Sigmoid colon (tissue), 7 donors: ENCODE measurements at regions of chr10 and their contacts with region 1.

Region 1: GRCh38 chr10:15097011-15097812 is at the start of gene RPP38:
- DNase-seq: peak; percentile 98
- H3K4me3 ChIP-seq: peak within 1 kb of the TSS; percentile 64 to 84 (median 76)
- H3K27ac ChIP-seq: peak within 1 kb of the TSS; percentile 87 to 95 (median 91)
- H3K4me1 ChIP-seq: peaks cover 0 to 32% (median 28%) of the 10 kb centered on the region in 4 donors
- H3K27me3 ChIP-seq: no peaks in the 10 kb centered on the region
- CTCF ChIP-seq: no peak
- EP300 ChIP-seq: no peak
- POLR2A ChIP-seq: peak in 1 of 2 donors; percentile 58
- total RNA-seq, gene RPP38: 8.7 to 29.5 (median 15.6) TPM

Region 2: DNA sequence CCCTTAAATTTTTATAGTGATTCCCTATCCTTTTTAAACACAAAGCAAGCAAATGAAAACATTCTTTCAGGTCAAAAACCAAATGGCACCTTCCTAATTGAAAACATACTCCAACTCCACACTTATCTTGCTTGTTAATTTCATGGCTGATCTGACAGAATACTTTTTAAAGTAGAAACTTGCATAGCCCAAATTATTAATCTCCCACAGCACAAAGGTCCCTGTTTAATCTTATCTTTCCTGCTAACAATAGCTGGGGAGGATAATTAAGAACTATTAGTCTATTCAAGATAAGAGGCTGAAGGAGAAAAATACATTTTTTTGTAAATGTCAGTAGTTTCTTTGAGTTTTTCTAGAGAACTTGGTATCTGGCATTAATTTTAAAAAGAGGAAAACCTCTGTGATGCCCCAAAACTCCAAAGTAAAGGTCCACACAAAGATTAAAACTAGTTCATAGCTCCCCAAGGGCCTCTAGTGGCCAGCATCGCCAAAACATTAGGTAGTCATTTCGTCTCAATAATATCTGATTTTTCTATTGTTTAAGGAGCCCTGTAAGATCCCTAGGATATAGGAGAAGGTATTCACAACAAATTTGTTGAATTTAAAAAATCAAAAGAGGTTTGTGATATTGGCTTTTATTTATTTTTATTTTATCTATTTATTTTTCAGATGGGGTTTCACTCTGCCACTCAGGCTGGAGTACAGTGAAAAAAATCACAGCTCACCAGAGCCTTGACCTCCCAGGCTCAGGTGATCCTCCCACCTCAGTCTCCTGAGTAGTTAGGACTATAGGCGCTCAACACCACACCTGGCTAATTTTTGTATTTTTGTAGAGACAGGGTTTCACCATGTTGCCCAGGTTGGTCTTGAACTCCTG is 274.1 kb before region 1 on chr10:
- intact Hi-C with region 1: no loop called
- DNase-seq: no peak
- H3K4me3 ChIP-seq: no peak overlapping the region
- H3K27ac ChIP-seq: no peak overlapping the region
- H3K4me1 ChIP-seq: peaks cover 0 to 6% (median 0%) of the 10 kb centered on the region in 4 donors
- H3K27me3 ChIP-seq: no peaks in the 10 kb centered on the region
- CTCF ChIP-seq: peak; percentile 17 to 60 (median 47)
- EP300 ChIP-seq: no peak
- POLR2A ChIP-seq: no peak

Region 3: DNA sequence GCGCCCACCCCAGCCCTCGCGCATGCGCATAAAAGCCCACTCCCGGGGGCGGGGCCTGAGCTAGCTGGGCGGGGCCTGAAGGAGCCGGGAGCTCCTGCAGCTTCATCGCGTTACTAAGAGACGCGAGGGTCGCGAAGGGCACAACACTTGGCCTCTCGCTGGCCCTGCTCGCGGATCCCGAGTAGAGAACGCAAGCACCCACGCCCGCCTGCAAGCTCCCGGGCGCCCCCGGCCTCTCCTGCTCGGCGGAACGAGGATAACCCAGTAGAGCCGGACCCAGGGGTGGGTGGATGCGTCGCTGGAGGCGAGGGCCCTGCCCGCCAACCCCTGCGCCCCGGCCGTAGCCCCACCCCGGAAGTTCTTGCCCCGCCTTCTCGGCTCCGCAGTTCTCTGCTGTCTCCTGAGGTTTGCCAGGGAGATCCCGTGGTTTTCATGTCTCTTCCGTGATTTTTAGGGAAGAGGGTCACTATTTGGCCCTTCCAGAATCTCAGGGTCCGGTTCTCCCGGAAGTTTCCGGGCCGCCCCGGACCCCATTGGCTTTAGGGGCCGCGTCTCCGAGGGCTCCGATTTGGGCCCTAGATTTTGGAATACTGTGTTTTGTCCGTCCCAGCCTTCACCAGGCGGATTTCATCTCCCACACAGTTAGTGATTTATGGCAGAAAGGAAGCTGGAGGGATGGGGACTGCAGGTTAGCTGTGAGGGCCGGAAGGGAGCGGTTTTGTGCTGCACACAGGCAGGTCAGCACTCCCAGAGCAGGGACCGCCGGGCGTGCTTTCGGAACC is 137.7 kb before region 1 on chr10 and contains the start of gene MEIG1:
- intact Hi-C with region 1: loop called (anchors 2 kb)
- DNase-seq: peak; percentile 97
- H3K4me3 ChIP-seq: peak within 1 kb of the TSS; percentile 62 to 71 (median 70)
- H3K27ac ChIP-seq: peak within 1 kb of the TSS; percentile 90 to 97 (median 95)
- H3K4me1 ChIP-seq: peaks cover 0 to 15% (median 8%) of the 10 kb centered on the region in 4 donors
- H3K27me3 ChIP-seq: no peaks in the 10 kb centered on the region
- CTCF ChIP-seq: no peak
- EP300 ChIP-seq: no peak
- POLR2A ChIP-seq: peak in 1 of 2 donors; percentile 39
- total RNA-seq, gene MEIG1: 1.3 TPM in 1 of 4 donors, not detected in the others

Region 4: GRCh38 chr10:15053061-15053460 is 44.2 kb before region 1 on chr10:
- intact Hi-C with region 1: no loop called
- DNase-seq: no peak
- H3K4me3 ChIP-seq: no peak overlapping the region
- H3K27ac ChIP-seq: no peak overlapping the region
- H3K4me1 ChIP-seq: no peaks in the 10 kb centered on the region
- H3K27me3 ChIP-seq: no peaks in the 10 kb centered on the region
- CTCF ChIP-seq: no peak
- EP300 ChIP-seq: no peak
- POLR2A ChIP-seq: no peak

Region 5: GRCh38 chr10:15168781-15169554 is 71.8 kb after region 1 on chr10:
- intact Hi-C with region 1: loop called (anchors 2 kb)
- DNase-seq: peak; percentile 99
- H3K4me3 ChIP-seq: peak overlapping the region in 2 of 4 donors; percentile 21 to 98
- H3K27ac ChIP-seq: peak overlapping the region; percentile 56 to 72 (median 68)
- H3K4me1 ChIP-seq: peaks cover 0 to 22% (median 13%) of the 10 kb centered on the region in 4 donors
- H3K27me3 ChIP-seq: no peaks in the 10 kb centered on the region
- CTCF ChIP-seq: no peak
- EP300 ChIP-seq: no peak
- POLR2A ChIP-seq: no peak

Region 6: DNA sequence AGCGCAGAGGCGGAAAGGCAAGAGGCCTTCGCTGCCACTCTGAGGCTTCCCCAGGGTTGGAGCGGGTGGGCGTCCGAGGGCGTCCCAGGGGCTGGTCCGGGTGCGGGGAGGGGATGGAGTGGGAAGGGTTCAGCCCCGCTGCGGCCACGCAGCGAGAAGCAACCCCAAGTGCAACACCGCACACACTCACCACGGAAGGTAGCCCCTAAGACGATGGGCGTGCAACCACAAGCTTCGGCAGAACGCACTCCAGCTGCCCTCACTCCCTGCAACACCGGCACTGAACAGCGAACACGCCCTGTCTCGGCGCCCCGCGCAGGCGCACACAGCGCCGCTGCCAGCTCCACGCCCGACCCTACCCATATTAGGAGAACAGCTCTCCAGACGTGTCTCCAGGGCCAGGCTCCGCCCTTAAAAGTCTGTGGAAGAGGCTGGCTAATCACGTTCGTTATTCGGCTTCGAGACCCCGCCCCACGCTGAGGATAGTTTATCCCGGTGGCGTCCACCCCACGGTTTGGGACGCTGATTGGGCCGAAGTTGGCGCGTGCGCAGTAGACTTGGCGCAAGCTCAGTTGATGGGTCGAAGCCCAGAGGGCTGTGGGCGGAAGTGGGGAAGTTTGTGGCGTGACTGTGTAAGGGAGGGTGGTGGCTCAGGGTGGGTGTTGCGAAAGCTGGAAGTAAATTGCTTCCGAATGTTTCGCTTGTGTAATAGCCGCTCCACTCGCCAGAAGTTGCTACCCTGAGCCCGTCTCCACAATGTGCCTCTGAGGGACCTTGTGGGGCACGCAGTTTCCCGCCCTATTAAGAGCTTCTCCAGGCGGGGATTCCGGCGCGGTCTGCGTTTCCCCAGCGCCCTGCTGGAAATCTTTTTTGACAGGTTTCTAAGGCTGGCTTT is 1720.2 kb after region 1 on chr10 and contains the start of gene RSU1:
- intact Hi-C with region 1: loop called (anchors 10 kb)
- DNase-seq: peak; percentile 100
- H3K4me3 ChIP-seq: peak within 1 kb of the TSS; percentile 57 to 92 (median 80)
- H3K27ac ChIP-seq: peak within 1 kb of the TSS; percentile 89 to 97 (median 92)
- H3K4me1 ChIP-seq: peaks cover 0 to 29% (median 28%) of the 10 kb centered on the region in 4 donors
- H3K27me3 ChIP-seq: no peaks in the 10 kb centered on the region
- CTCF ChIP-seq: no peak
- EP300 ChIP-seq: peak in 1 of 4 donors; percentile 18
- POLR2A ChIP-seq: peak; percentile 58 to 62
- total RNA-seq, gene RSU1: 50.3 to 94.7 (median 74.6) TPM